ENCODE measurements at regions of chr13 and their contacts with region 1.

Region 1: DNA sequence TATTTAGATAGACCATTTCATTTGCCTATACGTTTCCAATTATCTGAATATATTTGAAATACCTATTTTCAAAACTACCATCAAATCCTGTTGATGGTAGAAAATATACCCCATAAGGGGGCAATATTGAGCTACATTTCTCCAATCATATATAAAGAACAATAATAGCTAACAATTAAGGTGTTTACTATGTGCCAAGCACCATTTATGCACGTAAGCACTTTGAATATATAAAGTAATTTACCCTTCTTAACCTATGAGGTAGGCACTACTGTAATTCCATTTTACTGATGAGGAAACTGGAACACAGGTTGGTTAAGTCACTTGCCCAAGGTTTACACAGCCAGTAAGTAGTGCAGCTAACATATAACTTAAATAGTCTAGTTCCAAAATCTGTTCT is 79.2 kb downstream of the UBL3 start:
- DNase-seq: no peak
- CTCF ChIP-seq: no peak

Region 2: DNA sequence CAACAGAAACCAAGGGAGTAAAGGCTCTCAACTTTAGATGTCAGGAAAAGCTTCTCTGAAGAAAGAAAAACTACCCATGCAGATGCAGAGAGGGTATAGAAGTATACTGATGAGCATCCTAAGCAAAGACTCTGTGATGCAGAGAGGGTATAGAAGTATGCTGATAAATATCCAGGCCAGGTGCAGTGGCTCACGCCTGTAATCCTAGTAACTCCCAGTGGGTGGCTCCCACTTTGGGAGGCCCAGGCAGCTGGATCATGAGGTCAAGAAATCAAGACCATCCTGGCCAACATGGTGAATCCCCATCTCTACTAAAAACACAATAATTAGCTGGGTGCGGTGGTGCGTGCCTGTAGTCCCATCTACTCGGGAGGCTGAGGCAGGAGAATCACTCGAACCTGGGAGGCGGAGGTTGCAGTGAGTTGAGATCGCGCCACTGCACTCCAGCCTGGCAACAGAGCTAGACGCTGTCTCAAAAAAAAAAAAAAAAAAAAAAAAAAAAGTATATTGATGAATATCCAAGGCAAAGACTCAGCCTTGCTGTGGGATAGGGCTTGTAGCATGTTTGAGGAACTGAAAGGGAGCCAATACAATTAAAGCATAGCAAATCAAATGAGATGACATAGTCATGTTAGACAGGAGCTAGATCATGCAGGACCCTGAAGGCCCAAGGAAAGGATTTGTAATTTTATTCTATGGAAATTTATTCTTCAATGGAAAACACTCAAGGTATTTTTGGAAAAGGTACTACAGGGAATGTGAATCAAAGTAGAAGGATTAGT is 64.2 kb after region 1 on chr13:
- in situ Hi-C with region 1: no loop called
- DNase-seq: no peak
- CTCF ChIP-seq: no peak

Region 3: DNA sequence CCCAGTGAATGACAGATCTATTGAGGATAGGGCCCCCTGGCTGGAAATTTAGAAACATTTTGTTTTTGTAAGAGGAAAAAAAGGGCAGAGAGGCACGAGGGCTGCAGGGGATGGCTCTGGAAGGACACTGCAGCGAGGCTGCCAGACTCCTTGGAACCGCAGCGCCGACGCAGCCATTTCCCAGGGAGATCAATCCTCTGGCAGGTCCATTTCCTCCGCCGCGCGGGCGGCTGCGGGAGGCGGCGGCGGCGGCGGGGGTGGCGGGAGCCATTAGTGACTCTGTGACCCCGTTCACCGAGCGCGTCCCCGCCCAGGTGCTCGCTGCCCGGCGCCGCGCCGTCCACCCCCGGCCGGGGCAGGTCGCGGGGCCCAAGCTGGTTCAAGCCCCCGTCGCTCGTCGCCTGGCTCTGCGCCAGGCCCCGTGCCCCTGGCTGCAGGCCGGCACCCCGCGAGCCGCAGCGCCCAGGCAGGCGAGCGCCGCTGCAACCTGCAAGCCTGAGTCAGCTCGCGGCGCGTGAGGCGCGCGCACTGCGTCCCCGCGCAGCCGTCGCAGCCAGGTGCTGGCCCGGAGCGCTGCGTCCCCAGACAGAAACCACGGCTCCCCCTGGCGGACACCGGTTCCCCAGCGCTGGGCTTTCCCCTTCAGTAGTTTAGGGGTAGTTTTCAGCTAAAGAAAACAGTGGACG is 343.5 kb after region 1 on chr13:
- in situ Hi-C with region 1: loop called (anchors 10 kb)
- DNase-seq: peak; percentile 89
- CTCF ChIP-seq: peak; percentile 90

Measured in GM13976 (cell line).